ENCODE measurements at regions of chr11 and their contacts with region 1.

Region 1: GRCh38 chr11:2532704-2533586 is 88.1 kb downstream of the KCNQ1 start:
- DNase-seq: peak; percentile 94

Region 2: DNA sequence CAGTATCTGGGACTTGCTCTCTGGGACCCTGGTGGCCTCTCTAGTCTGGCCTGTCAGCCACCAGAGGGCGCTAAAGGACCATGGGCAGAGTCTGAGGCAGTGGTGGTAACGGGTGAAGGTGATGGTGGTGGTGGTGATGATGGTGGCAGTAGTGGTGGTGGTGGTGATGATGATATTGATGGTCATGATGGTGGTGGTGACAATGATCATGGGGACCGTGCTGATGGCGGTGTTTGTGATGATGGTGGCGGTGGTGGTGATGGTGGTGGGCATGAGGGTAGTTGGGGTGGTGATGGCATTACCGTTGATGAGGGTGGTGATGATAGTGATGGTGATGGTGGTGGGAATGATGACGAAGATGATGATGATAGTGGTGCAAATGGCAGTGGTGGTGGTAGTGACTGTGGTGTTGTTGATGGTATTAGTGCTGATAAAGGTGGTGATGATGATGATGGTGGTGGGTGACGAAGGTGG is 104.6 kb before region 1 on chr11:
- intact Hi-C with region 1: loop called (anchors 1 kb)
- DNase-seq: peak; percentile 91